ENCODE measurements at regions of chr10 and their contacts with region 1.

Region 1: GRCh38 chr10:59073456-59074053 is 102.9 kb upstream of the PHYHIPL start:
- DNase-seq: peak; percentile 91 to 94
- H3K4me3 ChIP-seq: no peak overlapping the region
- H3K4me3 Mint-ChIP-seq: no peak overlapping the region
- H3K27ac Mint-ChIP-seq: no peak overlapping the region
- H3K4me1 ChIP-seq: peaks cover 55% of the 10 kb centered on the region
- H3K4me1 Mint-ChIP-seq: peaks cover 13% of the 10 kb centered on the region
- H3K27me3 ChIP-seq: no peaks in the 10 kb centered on the region
- H3K27me3 Mint-ChIP-seq: no peaks in the 10 kb centered on the region
- CTCF ChIP-seq: no peak

Region 2: GRCh38 chr10:58993480-58994221 is 79.9 kb before region 1 on chr10:
- CTCF ChIA-PET with region 1: no interaction called
- POLR2A ChIA-PET with region 1: no interaction called
- intact Hi-C with region 1: loop called (anchors 1 kb)
- DNase-seq: no peak
- H3K4me3 ChIP-seq: no peak overlapping the region
- H3K4me3 Mint-ChIP-seq: peak overlapping the region; percentile 54
- H3K27ac Mint-ChIP-seq: peak overlapping the region; percentile 32
- H3K4me1 ChIP-seq: peaks cover 49% of the 10 kb centered on the region
- H3K4me1 Mint-ChIP-seq: peaks cover 38% of the 10 kb centered on the region
- H3K27me3 ChIP-seq: no peaks in the 10 kb centered on the region
- H3K27me3 Mint-ChIP-seq: no peaks in the 10 kb centered on the region
- CTCF ChIP-seq: no peak

Region 3: GRCh38 chr10:59036311-59037017 is 37.1 kb before region 1 on chr10:
- CTCF ChIA-PET with region 1: no interaction called
- POLR2A ChIA-PET with region 1: no interaction called
- intact Hi-C with region 1: loop called (anchors 2 kb)
- DNase-seq: no peak
- H3K4me3 ChIP-seq: no peak overlapping the region
- H3K4me3 Mint-ChIP-seq: no peak overlapping the region
- H3K27ac Mint-ChIP-seq: no peak overlapping the region
- H3K4me1 ChIP-seq: peaks cover 15% of the 10 kb centered on the region
- H3K4me1 Mint-ChIP-seq: peaks cover 31% of the 10 kb centered on the region
- H3K27me3 ChIP-seq: no peaks in the 10 kb centered on the region
- H3K27me3 Mint-ChIP-seq: no peaks in the 10 kb centered on the region
- CTCF ChIP-seq: no peak

Region 4: GRCh38 chr10:59126261-59126660 is 52.7 kb after region 1 on chr10:
- CTCF ChIA-PET with region 1: no interaction called
- POLR2A ChIA-PET with region 1: no interaction called
- intact Hi-C with region 1: loop called (anchors 1 kb)
- DNase-seq: no peak
- H3K4me3 ChIP-seq: no peak overlapping the region
- H3K4me3 Mint-ChIP-seq: no peak overlapping the region
- H3K27ac Mint-ChIP-seq: peak overlapping the region; percentile 86
- H3K4me1 ChIP-seq: peaks cover 33% of the 10 kb centered on the region
- H3K4me1 Mint-ChIP-seq: peaks cover 21% of the 10 kb centered on the region
- H3K27me3 ChIP-seq: no peaks in the 10 kb centered on the region
- H3K27me3 Mint-ChIP-seq: no peaks in the 10 kb centered on the region
- CTCF ChIP-seq: no peak

Region 5: DNA sequence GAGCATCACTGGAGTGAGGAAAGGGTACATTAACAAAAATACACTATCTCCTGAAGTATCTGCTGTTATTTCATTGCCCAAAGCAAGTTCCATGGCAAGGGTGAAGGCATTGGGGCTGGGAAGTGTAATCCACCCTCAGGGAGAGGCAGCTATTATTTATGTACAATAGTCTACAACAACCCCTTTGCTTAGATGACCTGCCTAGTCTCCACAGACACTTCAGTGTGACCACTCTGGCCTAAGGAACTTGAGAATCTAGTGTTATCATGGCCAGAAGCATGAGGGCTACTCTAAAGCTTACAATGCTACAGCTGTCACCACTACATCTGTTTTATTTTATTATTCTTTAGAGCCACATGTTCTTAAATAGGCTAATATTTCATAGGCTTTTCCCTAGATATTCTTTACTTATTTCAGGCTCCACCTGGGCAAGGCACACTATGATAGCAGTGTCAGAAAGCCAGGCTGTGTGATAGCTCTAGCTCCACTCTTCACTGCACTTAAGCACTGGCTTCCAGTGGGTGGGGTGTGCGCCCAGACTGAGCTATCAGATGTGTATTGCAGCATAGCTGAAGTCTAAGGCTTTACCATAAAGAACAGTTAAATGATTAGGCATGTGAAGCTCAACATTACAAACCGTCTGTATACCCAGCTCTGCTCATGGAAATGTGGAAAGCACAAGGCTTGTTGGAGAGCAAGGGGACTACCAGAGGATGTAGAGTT is 949.8 kb after region 1 on chr10:
- CTCF ChIA-PET with region 1: no interaction called
- POLR2A ChIA-PET with region 1: no interaction called
- intact Hi-C with region 1: no loop called
- DNase-seq: no peak
- H3K4me3 ChIP-seq: no peak overlapping the region
- H3K4me3 Mint-ChIP-seq: no peak overlapping the region
- H3K27ac Mint-ChIP-seq: no peak overlapping the region
- H3K4me1 ChIP-seq: no peaks in the 10 kb centered on the region
- H3K4me1 Mint-ChIP-seq: no peaks in the 10 kb centered on the region
- H3K27me3 ChIP-seq: no peaks in the 10 kb centered on the region
- H3K27me3 Mint-ChIP-seq: no peaks in the 10 kb centered on the region
- CTCF ChIP-seq: no peak